Heart right ventricle (tissue), 16 donors: ENCODE measurements at regions of chr7 and their contacts with region 1.

Region 1: GRCh38 chr7:67625257-67625737 is 628.7 kb downstream of the TYW1 start:
- DNase-seq: peak; percentile 77 to 84
- ATAC-seq: peak; percentile 85 to 95 (median 89)
- H3K4me3 ChIP-seq: peak overlapping the region in 5 of 10 donors; percentile 17 to 38 (median 33)
- H3K27ac ChIP-seq: no peak overlapping the region
- H3K4me1 ChIP-seq: peaks cover 0 to 8% (median 0%) of the 10 kb centered on the region in 9 donors
- H3K27me3 ChIP-seq: peaks cover 0 to 59% (median 31%) of the 10 kb centered on the region in 7 donors
- CTCF ChIP-seq: peak; percentile 81 to 94 (median 86)

Region 2: DNA sequence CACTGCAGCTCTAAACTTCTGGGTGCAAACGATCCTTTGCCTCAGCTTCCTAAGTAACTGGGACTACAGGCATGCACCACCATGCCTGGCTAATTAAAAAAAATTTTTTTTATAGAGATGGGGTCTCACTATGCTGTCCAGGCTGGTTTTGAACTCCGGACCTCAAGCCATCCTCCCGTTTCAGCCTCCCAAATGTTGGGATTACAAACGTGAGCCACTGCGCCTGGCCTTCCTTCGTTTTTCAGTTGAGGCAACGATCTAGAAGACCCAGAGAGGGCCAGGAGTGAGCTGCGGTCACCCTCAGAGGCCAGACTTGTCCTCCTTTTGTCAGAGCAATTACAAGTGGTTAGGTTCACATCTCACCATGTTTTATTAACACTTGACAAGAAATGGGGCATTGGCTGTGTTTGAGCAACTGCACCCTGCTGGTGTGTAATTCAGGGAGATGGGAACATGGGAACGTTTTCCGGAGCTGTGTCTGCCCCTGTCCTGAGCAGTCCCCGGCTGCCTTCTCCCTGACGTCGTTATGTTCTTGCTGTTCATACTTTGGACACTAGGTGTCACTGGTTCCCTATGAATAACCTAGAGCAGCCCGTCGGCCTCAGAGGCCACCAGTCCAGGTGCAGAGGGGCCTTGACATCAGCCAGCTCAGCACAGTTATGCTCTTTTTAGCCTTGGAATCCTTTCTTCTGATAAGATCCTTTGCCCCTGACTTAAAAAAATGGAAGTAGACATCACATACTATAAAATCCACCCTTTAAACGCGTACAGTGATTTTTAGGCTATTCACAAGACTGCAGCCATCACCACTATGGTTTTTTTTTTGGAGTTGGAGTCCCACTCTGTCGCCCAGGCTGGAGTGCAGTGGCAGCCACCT is 253.6 kb before region 1 on chr7:
- intact Hi-C with region 1: loop called in 1 of 10 experiments (anchors 10 kb)
- DNase-seq: peak; percentile 25 to 56
- ATAC-seq: peak; percentile 65 to 94 (median 90)
- H3K4me3 ChIP-seq: no peak overlapping the region
- H3K27ac ChIP-seq: no peak overlapping the region
- H3K4me1 ChIP-seq: no peaks in the 10 kb centered on the region
- H3K27me3 ChIP-seq: peaks cover 0 to 49% (median 15%) of the 10 kb centered on the region in 7 donors
- CTCF ChIP-seq: peak; percentile 51 to 86 (median 83)

Region 3: GRCh38 chr7:67593794-67594193 is 31.5 kb before region 1 on chr7:
- intact Hi-C with region 1: no loop called
- DNase-seq: no peak
- ATAC-seq: no peak
- H3K4me3 ChIP-seq: no peak overlapping the region
- H3K27ac ChIP-seq: no peak overlapping the region
- H3K4me1 ChIP-seq: no peaks in the 10 kb centered on the region
- H3K27me3 ChIP-seq: peaks cover 0 to 21% (median 5%) of the 10 kb centered on the region in 7 donors
- CTCF ChIP-seq: no peak